ENCODE measurements at regions of chr3 and their contacts with region 1.

Region 1: GRCh38 chr3:68057637-68058320 is 403.4 kb upstream of the SUCLG2 start:
- DNase-seq: peak; percentile 84 to 89 (median 85)
- H3K4me3 ChIP-seq: peak overlapping the region in 1 of 2 donors; percentile 33
- H3K4me3 Mint-ChIP-seq: peak overlapping the region; percentile 51 to 85 (median 82)
- H3K27ac ChIP-seq: peak overlapping the region; percentile 37
- H3K27ac Mint-ChIP-seq: peak overlapping the region; percentile 76 to 91 (median 85)
- H3K4me1 ChIP-seq: peaks cover 60% of the 10 kb centered on the region
- H3K4me1 Mint-ChIP-seq: peaks cover 49 to 80% (median 67%) of the 10 kb centered on the region in 4 donors
- H3K27me3 ChIP-seq: no peaks in the 10 kb centered on the region
- H3K27me3 Mint-ChIP-seq: no peaks in the 10 kb centered on the region

Region 2: GRCh38 chr3:66998113-66998903 is 1059.5 kb before region 1 on chr3 and contains the start of gene KBTBD8:
- CTCF ChIA-PET with region 1: no interaction called
- POLR2A ChIA-PET with region 1: no interaction called
- intact Hi-C with region 1: loop called (anchors 1 kb)
- DNase-seq: peak; percentile 98 to 99 (median 98)
- H3K4me3 ChIP-seq: peak within 1 kb of the TSS; percentile 57 to 85
- H3K4me3 Mint-ChIP-seq: peak within 1 kb of the TSS; percentile 90 to 96 (median 94)
- H3K27ac ChIP-seq: peak within 1 kb of the TSS; percentile 67
- H3K27ac Mint-ChIP-seq: peak within 1 kb of the TSS; percentile 88 to 97 (median 95)
- H3K4me1 ChIP-seq: peaks cover 39% of the 10 kb centered on the region
- H3K4me1 Mint-ChIP-seq: peaks cover 23 to 48% (median 30%) of the 10 kb centered on the region in 4 donors
- H3K27me3 ChIP-seq: peaks cover 3% of the 10 kb centered on the region
- H3K27me3 Mint-ChIP-seq: peaks cover 0 to 4% of the 10 kb centered on the region in 2 donors
- total RNA-seq, gene KBTBD8: 8.3 to 10.8 TPM

Region 3: DNA sequence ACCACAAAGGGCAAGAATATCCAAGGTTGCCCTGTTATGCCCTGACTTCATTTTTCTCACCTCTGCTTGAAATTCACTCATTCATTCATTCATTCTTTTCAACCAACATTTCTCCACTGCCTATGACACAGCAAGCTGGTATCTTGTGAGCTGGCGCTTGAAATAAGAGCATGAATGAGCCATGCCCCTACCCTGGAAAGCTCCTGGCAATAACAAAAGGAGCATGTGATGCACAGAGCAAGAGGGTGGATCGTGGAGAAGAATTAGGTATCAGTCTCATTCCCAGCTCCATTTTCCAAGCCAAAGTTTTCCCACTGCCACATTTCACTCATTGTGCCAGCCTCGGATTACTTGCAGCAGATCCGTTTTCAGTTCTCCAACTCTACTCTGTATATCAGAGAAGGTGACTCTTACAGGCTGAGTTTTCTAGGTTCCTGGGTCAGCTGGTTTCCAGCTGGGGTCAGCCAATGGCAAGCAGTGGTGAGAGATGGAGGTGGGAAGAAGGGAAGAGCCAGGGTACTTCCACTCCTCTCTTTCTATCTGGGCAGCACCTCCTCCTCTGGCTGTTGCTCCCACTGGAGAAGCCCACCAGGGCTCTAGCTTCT is 548.2 kb before region 1 on chr3:
- CTCF ChIA-PET with region 1: no interaction called
- POLR2A ChIA-PET with region 1: no interaction called
- intact Hi-C with region 1: no loop called
- DNase-seq: no peak
- H3K4me3 ChIP-seq: no peak overlapping the region
- H3K4me3 Mint-ChIP-seq: no peak overlapping the region
- H3K27ac ChIP-seq: no peak overlapping the region
- H3K27ac Mint-ChIP-seq: peak overlapping the region in 3 of 7 donors; percentile 57 to 82 (median 68)
- H3K4me1 ChIP-seq: no peaks in the 10 kb centered on the region
- H3K4me1 Mint-ChIP-seq: peaks cover 0 to 3% (median 0%) of the 10 kb centered on the region in 4 donors
- H3K27me3 ChIP-seq: no peaks in the 10 kb centered on the region
- H3K27me3 Mint-ChIP-seq: no peaks in the 10 kb centered on the region

Region 4: GRCh38 chr3:67875338-67875737 is 182.4 kb before region 1 on chr3:
- CTCF ChIA-PET with region 1: no interaction called
- POLR2A ChIA-PET with region 1: no interaction called
- intact Hi-C with region 1: no loop called
- DNase-seq: no peak
- H3K4me3 ChIP-seq: no peak overlapping the region
- H3K4me3 Mint-ChIP-seq: no peak overlapping the region
- H3K27ac ChIP-seq: no peak overlapping the region
- H3K27ac Mint-ChIP-seq: no peak overlapping the region
- H3K4me1 ChIP-seq: no peaks in the 10 kb centered on the region
- H3K4me1 Mint-ChIP-seq: no peaks in the 10 kb centered on the region
- H3K27me3 ChIP-seq: no peaks in the 10 kb centered on the region
- H3K27me3 Mint-ChIP-seq: no peaks in the 10 kb centered on the region

Region 5: DNA sequence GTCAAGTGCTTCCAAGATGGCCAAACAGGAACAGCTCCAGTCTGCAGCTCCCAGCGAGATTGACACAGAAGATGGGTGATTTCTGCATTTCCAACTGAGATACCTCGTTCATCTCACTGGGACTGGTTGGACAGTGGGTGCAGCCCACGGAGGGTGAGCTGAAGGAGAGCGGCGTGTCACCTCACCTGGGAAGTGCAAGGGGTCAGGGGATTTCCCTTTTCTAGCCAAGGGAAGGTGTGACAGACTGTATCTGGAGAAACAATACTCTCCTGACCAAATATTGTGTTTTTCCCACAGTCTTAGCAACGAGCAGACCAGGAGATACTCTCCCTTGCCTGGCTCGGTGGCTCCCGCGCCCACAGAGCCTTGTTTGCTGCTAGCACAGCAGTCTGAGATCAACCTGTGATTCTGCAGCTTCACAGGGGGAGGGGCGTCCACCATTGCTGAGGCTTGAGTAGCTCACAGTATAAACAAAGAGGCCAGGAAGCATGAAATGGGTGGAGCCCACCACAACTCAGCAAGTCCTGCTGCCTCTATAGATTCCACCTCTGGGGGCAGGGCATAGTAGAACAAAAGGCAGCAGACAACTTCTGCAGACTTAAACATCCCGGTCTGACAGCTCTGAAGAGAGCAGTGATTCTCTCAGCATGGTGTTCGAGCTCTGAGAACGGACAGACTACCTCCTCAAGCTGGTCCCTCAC is 109.8 kb before region 1 on chr3:
- CTCF ChIA-PET with region 1: interaction called, 4 read pairs
- POLR2A ChIA-PET with region 1: interaction called, 7 read pairs
- intact Hi-C with region 1: loop called (anchors 1 kb)
- DNase-seq: peak; percentile 75 to 86 (median 82)
- H3K4me3 ChIP-seq: peak overlapping the region; percentile 24 to 51
- H3K4me3 Mint-ChIP-seq: peak overlapping the region; percentile 81 to 95 (median 84)
- H3K27ac ChIP-seq: no peak overlapping the region
- H3K27ac Mint-ChIP-seq: peak overlapping the region; percentile 59 to 95 (median 86)
- H3K4me1 ChIP-seq: peaks cover 27% of the 10 kb centered on the region
- H3K4me1 Mint-ChIP-seq: peaks cover 21 to 46% (median 29%) of the 10 kb centered on the region in 4 donors
- H3K27me3 ChIP-seq: no peaks in the 10 kb centered on the region
- H3K27me3 Mint-ChIP-seq: no peaks in the 10 kb centered on the region

Region 6: DNA sequence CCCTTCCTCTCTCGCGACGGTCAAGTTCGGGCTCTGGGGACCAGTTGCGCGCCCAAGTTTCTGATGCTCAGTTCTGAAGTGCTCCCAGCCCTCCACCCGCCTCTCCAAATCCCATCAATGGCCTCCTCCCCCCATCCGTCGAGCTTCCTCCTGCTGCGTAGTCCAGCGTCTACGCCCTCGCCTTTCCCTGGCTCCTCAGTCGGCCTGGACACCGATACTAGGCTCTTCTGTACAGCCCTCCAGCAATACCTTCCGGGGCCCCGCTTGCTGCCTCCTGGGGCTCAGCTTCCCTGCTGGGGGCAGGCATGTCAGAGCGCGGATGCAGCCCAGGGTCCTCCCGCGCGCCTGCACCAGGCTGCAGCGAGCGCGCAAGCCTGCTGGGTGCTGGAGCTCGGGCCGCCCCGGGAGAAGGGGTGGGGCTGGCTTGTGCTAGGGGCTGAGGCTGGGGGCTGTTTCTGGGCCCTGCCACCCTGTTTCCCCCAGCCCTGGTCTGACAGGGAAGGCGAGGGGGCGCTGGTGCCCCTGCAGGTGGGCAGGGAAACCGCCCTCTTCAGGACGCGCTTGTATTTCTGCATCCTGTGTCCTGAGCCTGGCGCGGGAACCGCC is 50.1 kb before region 1 on chr3:
- CTCF ChIA-PET with region 1: no interaction called
- POLR2A ChIA-PET with region 1: interaction called, 4 read pairs
- intact Hi-C with region 1: loop called (anchors 5 kb)
- DNase-seq: peak; percentile 33 to 39 (median 38)
- H3K4me3 ChIP-seq: peak overlapping the region; percentile 9 to 33
- H3K4me3 Mint-ChIP-seq: peak overlapping the region; percentile 72 to 95 (median 87)
- H3K27ac ChIP-seq: no peak overlapping the region
- H3K27ac Mint-ChIP-seq: peak overlapping the region in 3 of 7 donors; percentile 44 to 75 (median 69)
- H3K4me1 ChIP-seq: no peaks in the 10 kb centered on the region
- H3K4me1 Mint-ChIP-seq: peaks cover 9 to 28% (median 15%) of the 10 kb centered on the region in 4 donors
- H3K27me3 ChIP-seq: peaks cover 9% of the 10 kb centered on the region
- H3K27me3 Mint-ChIP-seq: peaks cover 10 to 12% of the 10 kb centered on the region in 2 donors

Region 7: DNA sequence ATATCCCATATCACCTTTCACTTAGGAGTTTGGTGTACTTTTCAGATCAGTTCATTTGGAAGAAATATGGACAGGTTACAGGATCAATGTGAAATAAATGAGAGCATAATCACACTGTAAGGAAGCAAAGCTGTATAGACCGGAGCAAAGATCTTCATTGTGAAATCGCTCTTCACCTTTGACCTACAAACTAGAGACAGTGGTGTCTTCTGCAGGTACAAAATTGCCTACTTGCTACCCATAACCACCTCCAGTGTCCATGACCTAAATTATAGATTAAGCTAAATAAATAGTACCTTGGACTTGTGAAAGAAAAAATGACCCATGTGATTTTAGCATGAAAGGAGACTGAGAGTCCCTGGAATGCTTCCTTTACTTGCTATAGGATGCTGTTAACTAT is 23.9 kb before region 1 on chr3:
- CTCF ChIA-PET with region 1: no interaction called
- POLR2A ChIA-PET with region 1: no interaction called
- intact Hi-C with region 1: loop called (anchors 2 kb)
- DNase-seq: no peak
- H3K4me3 ChIP-seq: no peak overlapping the region
- H3K4me3 Mint-ChIP-seq: no peak overlapping the region
- H3K27ac ChIP-seq: no peak overlapping the region
- H3K27ac Mint-ChIP-seq: no peak overlapping the region
- H3K4me1 ChIP-seq: no peaks in the 10 kb centered on the region
- H3K4me1 Mint-ChIP-seq: peaks cover 0 to 2% (median 0%) of the 10 kb centered on the region in 4 donors
- H3K27me3 ChIP-seq: no peaks in the 10 kb centered on the region
- H3K27me3 Mint-ChIP-seq: peaks cover 0 to 4% of the 10 kb centered on the region in 2 donors

Region 8: DNA sequence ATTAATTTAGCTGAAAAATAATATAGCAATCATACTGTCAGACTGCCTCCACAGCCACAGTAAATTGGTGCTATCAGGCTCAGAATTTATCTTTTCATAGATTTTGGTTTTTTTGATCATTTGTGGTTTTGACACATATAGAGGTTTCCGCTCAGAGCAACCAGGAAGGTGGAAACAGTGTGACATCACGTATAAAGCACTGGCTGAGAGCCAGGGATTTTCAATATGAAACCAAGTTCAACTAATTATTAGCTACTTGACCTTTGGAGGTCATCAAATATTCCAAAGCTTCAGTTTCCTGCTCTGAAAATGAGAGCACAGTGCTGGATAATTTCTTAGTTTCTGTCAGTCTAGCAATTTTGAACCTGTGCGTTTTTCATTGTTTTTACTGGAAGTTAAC is 30.4 kb after region 1 on chr3:
- CTCF ChIA-PET with region 1: interaction called, 5 read pairs
- POLR2A ChIA-PET with region 1: interaction called, 24 read pairs
- intact Hi-C with region 1: loop called (anchors 1 kb)
- DNase-seq: peak; percentile 76 to 83 (median 79)
- H3K4me3 ChIP-seq: no peak overlapping the region
- H3K4me3 Mint-ChIP-seq: peak overlapping the region in 7 of 8 donors; percentile 29 to 79 (median 64)
- H3K27ac ChIP-seq: no peak overlapping the region
- H3K27ac Mint-ChIP-seq: peak overlapping the region; percentile 64 to 92 (median 86)
- H3K4me1 ChIP-seq: peaks cover 62% of the 10 kb centered on the region
- H3K4me1 Mint-ChIP-seq: peaks cover 50 to 92% (median 69%) of the 10 kb centered on the region in 4 donors
- H3K27me3 ChIP-seq: no peaks in the 10 kb centered on the region
- H3K27me3 Mint-ChIP-seq: no peaks in the 10 kb centered on the region

Measured in CD4-positive, alpha-beta memory T cell (primary cell).